HepG2 (cell line): ENCODE measurements at regions of chr17 and their contacts with region 1.

Region 1: DNA sequence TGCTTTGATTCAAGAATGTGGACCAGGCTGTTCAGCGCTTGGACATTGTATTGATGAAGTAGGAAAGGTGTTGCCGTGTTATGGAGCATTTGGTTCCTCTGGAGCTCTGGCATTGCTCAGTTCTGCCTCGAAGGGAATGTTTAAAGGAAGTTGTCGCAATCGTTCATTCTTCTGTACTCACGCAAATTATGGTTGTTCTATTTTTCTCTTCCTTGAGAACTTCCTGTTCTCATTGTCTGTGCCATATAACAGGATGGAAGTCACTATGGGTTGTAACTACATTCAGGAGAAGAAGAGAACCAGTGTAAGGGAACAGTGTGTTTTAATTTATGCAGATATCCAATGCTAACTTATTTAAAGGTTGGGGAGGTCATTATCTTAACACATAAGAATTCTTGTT is 13.0 kb downstream of the PCTP start:
- DNase-seq: no peak
- ATAC-seq: no peak
- H3K4me3 ChIP-seq: no peak overlapping the region
- H3K27ac ChIP-seq: no peak overlapping the region
- H3K4me1 ChIP-seq: peaks cover 63% of the 10 kb centered on the region
- H3K27me3 ChIP-seq: no peaks in the 10 kb centered on the region
- CTCF ChIP-seq: no peak
- EP300 ChIP-seq: no peak
- POLR2A ChIP-seq: no peak
- RAD21 ChIP-seq: no peak

Region 2: DNA sequence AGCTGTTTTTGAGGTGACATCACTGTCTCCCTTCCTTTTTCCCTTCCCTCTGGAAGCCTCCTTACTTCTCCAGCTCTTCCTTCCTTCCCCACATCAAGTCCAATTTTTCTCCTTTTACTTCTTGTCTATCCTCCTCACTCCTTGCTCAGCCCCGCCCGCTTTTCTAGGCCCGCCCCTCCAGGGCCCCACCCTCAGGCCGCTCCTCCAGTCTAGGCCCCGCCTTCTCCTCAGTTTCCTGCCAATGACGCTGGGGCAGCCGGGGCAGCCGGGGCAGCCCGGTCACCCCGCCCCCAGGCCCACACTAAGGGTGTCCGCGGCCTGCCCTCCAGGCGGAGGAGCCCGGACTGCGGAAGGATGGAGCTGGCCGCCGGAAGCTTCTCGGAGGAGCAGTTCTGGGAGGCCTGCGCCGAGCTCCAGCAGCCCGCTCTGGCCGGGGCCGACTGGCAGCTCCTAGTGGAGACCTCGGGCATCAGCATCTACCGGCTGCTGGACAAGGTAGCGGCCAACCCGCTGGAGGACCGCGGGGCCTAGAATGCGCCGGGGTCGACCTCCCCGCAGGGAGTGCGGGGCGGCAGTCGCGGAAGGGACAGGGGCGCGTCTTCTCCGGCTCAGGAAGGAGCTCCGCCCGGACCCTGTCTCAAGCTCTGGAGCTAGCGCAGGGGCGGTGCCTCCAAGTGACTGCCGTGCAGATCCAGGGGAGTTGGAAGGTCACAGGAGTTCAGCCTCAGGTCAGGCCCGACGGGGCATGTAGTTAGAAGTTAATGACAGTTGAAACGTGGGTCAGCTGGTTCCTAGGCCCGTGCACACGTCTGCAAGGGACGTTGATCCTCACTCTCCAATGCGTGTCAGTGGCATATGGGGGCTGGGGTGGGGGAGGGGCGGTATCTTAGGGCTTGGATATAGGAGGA is 12.8 kb before region 1 on chr17 and contains the start of gene PCTP:
- CTCF ChIA-PET with region 1: no interaction called
- POLR2A ChIA-PET with region 1: interaction called, 17 read pairs
- in situ Hi-C with region 1: no loop called
- intact Hi-C with region 1: loop called (anchors 1 kb)
- DNase-seq: peak; percentile 87
- ATAC-seq: peak; percentile 99
- H3K4me3 ChIP-seq: peak within 1 kb of the TSS; percentile 84 to 93 (median 93)
- H3K27ac ChIP-seq: peak within 1 kb of the TSS; percentile 66
- H3K4me1 ChIP-seq: peaks cover 39% of the 10 kb centered on the region
- H3K27me3 ChIP-seq: no peaks in the 10 kb centered on the region; a peak in 1 of 5 replicates
- CTCF ChIP-seq: peak; percentile 50
- EP300 ChIP-seq: no peak
- POLR2A ChIP-seq: peak; percentile 74 to 80
- RAD21 ChIP-seq: peak; percentile 83
- total RNA-seq, gene PCTP: 50.7 and 66.3 TPM in 2 replicates